RWPE1 (cell line): ENCODE measurements at regions of chr1 and their contacts with region 1.

Region 1: DNA sequence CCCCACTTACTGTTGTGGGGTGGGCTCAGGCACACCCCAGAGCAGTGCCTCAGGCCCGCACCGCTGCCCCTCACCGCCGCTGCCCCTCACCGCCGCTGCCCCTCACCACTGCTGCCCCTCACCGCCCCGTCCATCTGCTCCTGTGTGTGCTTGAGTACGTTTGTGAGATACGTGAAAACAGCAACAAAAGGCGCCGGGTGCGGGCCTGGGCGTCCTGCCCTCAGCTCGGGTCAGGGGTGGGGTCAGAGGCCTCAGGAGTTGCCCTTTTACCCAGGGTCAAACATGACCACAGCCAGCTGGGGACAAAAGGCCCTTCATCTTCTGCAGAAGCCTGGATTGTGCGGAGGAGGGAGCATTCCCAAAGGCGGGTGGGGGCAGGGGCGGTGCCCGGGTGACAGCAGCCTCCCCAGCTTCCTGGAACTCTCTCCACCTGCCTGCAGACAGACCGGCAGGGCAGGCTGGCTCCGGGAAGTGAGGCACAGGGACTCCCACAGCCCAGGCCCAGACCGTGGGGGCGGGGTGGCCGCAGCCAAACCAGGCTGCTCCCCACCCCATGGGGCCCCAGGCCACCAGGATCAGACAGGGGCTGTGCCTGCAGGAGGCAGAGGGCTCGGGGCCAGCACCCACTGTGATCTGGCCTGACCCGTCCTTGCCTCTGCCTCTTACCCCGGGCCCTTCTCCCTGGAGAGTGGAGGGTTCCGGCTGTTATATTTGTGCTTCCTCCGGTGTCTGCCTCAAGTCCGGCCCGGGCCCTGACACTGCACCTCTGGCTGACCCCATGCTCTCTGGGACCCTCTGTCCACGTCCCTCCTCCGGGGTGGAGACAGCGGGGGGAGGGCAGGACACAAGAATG is 2.3 kb upstream of the VWA1 start:
- DNase-seq: peak; percentile 75
- H3K27ac ChIP-seq: peak overlapping the region; percentile 42
- CTCF ChIP-seq: no peak

Region 2: GRCh38 chr1:1399187-1399871 is 33.8 kb before region 1 on chr1 and contains the start of gene CCNL2:
- CTCF ChIA-PET with region 1: interaction called, 5 read pairs
- POLR2A ChIA-PET with region 1: interaction called, 11 read pairs
- DNase-seq: peak; percentile 98
- H3K27ac ChIP-seq: peak within 1 kb of the TSS; percentile 82
- CTCF ChIP-seq: peak; percentile 56